Prostate gland (tissue), 2 donors: ENCODE measurements at regions of chr2 and their contacts with region 1.

Region 1: DNA sequence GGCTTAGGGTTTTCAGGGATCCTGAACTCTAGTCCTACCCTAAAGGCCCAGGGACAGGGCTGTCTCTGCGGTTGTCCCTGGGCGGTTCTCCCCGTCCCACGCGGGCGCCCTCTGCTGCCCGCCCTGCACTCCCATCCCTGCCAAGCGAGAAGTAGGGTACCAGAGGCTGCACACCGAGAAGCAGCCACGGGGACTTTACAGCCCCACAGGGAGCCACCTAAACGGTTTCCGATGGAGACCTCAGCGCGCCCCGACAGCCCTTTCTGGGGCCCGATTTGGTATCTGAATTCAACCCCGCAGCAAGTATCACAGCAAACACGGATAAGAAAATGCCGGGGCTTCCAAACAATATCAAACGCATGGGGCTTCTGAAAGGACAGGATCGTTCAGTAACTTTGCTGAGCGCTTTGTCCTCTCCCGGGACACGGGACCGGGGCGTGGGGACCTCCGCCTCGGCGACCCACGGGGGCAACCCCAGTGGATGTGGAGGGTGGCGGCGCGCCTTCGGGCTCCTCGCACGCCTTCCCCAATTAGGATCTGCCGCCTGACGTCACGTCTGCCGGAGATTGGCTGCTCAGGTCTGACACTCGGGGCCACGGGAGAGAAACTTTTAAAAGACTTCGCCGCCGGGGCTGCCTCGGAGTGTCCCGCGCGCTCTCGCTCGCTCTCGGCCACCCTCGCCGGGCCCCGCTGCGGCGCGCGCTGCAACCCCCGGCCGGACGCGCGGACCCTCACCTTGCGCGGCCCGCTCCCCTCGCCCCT is at the start of gene LTBP1:
- DNase-seq: peak; percentile 75
- H3K4me3 ChIP-seq: peak within 1 kb of the TSS; percentile 89 to 92
- H3K27ac ChIP-seq: peak within 1 kb of the TSS; percentile 90 to 91
- H3K4me1 ChIP-seq: no peaks in the 10 kb centered on the region
- H3K27me3 ChIP-seq: no peaks in the 10 kb centered on the region
- CTCF ChIP-seq: peak; percentile 55 to 74 (median 68)
- POLR2A ChIP-seq: peak; percentile 68
- total RNA-seq, gene LTBP1: 25.9 to 99.8 TPM

Region 2: DNA sequence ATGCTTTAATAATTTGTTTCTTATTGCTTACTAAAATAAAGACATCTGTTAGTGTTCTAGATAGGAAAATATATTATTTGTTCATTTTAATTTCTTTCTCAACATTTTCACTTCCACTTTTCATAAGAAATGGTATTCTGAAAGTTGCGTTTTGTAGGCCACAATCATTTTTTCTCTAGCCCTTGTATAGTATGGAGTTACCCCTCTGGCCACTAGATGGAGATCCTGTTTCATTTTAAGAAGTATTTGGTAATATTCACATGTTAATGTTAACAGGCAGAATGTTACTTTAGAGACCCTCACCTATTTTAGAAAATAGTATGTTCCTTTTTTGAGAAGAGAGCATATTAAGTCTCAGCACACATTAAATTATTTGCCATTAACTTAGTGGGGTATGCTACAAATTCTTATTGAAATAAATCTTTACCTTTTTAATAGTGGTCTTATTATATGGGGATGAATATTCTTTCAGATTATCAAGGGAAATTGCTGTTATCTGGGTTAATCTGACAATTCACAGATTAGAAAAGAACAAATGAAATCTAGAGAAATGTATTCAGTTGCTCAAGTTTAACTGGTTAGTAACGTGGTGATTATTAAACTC is 392.6 kb before region 1 on chr2:
- intact Hi-C with region 1: loop called (anchors 10 kb)
- DNase-seq: no peak
- H3K4me3 ChIP-seq: no peak overlapping the region
- H3K27ac ChIP-seq: no peak overlapping the region
- H3K4me1 ChIP-seq: no peaks in the 10 kb centered on the region
- H3K27me3 ChIP-seq: no peaks in the 10 kb centered on the region
- CTCF ChIP-seq: peak in 3 of 4 experiments; percentile 46 to 73 (median 71)
- POLR2A ChIP-seq: no peak

Region 3: DNA sequence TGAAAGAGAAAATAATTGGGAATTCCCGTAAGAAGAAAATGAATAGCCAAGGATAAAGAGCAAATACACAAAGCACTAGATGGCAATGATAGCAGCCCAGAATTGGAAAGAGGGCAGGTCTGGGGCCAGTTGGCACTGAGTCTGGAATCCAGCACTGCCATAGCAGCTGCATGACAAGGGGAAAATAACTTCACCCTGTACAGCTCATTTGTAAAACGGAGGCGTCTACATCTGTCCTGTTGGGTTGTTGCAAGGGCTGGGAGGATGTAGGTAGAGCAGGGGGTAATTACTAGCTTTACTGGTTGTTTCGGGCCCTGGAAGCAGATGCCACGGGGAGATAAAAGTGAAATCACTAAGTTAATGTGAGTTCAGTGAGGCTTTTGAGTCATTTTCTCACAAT is 420.0 kb after region 1 on chr2:
- intact Hi-C with region 1: loop called (anchors 10 kb)
- DNase-seq: peak; percentile 33
- H3K4me3 ChIP-seq: no peak overlapping the region
- H3K27ac ChIP-seq: no peak overlapping the region
- H3K4me1 ChIP-seq: no peaks in the 10 kb centered on the region
- H3K27me3 ChIP-seq: no peaks in the 10 kb centered on the region
- CTCF ChIP-seq: no peak
- POLR2A ChIP-seq: no peak

Region 4: GRCh38 chr2:33583194-33583938 is 636.9 kb after region 1 on chr2:
- intact Hi-C with region 1: loop called (anchors 10 kb)
- DNase-seq: no peak
- H3K4me3 ChIP-seq: no peak overlapping the region
- H3K27ac ChIP-seq: no peak overlapping the region
- H3K4me1 ChIP-seq: no peaks in the 10 kb centered on the region
- H3K27me3 ChIP-seq: no peaks in the 10 kb centered on the region
- CTCF ChIP-seq: peak; percentile 51 to 83 (median 67)
- POLR2A ChIP-seq: no peak